CD8-positive, alpha-beta T cell (primary cell): ENCODE measurements at regions of chr19 and their contacts with region 1.

Region 1: DNA sequence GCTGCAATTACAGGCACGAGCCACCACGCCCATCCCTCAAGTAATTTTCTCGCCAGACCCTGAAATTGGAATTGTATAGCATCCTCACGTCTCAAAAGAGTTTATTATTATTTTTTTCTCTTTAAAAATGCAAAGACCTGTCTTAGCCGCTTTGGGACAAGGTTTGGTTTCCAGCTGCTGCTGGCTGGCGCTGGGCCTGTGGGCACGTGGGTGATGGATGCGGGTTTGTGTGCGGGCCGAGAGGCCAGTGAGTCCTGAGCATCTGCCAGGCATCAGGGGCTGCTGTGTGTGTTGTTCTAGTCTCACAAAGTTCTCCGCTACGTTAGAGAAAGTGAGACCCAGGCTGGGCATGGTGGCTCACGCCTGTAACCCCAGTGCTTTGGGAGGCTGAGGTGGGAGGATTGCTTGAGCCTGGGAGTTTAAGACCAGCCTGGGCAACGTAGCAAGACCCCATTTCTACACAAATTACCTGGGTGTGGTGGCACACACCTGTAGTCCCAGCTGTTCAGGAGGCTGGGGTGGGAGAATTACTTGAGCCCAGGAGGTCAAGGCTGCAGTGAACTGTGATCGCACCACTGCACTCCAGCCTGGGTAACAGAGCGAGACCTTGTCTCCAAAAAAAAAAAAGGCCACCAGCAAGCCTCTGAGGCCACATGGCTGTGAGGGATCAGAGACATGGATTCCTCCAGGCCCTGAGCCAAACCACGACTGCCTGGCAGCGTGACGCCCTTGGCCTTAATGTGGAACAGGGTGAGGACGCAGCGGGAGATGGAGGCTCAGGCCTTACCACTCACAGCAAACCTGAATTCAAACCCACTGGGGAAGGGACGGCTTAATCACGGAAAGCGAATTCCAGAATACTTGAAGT is 4.7 kb upstream of the TMPRSS9 start:
- DNase-seq: no peak
- ATAC-seq: no peak
- H3K4me3 ChIP-seq: no peak overlapping the region
- H3K4me3 Mint-ChIP-seq: no peak overlapping the region
- H3K27ac ChIP-seq: no peak overlapping the region
- H3K27ac Mint-ChIP-seq: no peak overlapping the region
- H3K4me1 ChIP-seq: no peaks in the 10 kb centered on the region
- H3K4me1 Mint-ChIP-seq: peaks cover 1% of the 10 kb centered on the region
- H3K27me3 ChIP-seq: no peaks in the 10 kb centered on the region
- H3K27me3 Mint-ChIP-seq: peaks cover 1% of the 10 kb centered on the region
- CTCF ChIP-seq: no peak

Region 2: GRCh38 chr19:2302319-2303210 is 52.8 kb before region 1 on chr19:
- CTCF ChIA-PET with region 1: no interaction called
- POLR2A ChIA-PET with region 1: no interaction called
- intact Hi-C with region 1: no loop called
- DNase-seq: peak in 2 of 9 experiments; percentile 20 to 51
- ATAC-seq: peak; percentile 58
- H3K4me3 ChIP-seq: no peak overlapping the region
- H3K4me3 Mint-ChIP-seq: peak overlapping the region; percentile 64
- H3K27ac ChIP-seq: no peak overlapping the region
- H3K27ac Mint-ChIP-seq: no peak overlapping the region
- H3K4me1 ChIP-seq: peaks cover 17% of the 10 kb centered on the region
- H3K4me1 Mint-ChIP-seq: peaks cover 5% of the 10 kb centered on the region
- H3K27me3 ChIP-seq: peaks cover 6 to 19% of the 10 kb centered on the region in 2 experiments
- H3K27me3 Mint-ChIP-seq: peaks cover 27% of the 10 kb centered on the region
- CTCF ChIP-seq: no peak

Region 3: GRCh38 chr19:2315818-2316353 is 39.5 kb before region 1 on chr19:
- CTCF ChIA-PET with region 1: no interaction called
- POLR2A ChIA-PET with region 1: no interaction called
- intact Hi-C with region 1: no loop called
- DNase-seq: peak in 4 of 9 experiments; percentile 29 to 66 (median 51)
- ATAC-seq: no peak
- H3K4me3 ChIP-seq: no peak overlapping the region
- H3K4me3 Mint-ChIP-seq: no peak overlapping the region
- H3K27ac ChIP-seq: no peak overlapping the region
- H3K27ac Mint-ChIP-seq: no peak overlapping the region
- H3K4me1 ChIP-seq: peaks cover 6% of the 10 kb centered on the region
- H3K4me1 Mint-ChIP-seq: no peaks in the 10 kb centered on the region
- H3K27me3 ChIP-seq: peaks cover 6 to 10% of the 10 kb centered on the region in 2 experiments
- H3K27me3 Mint-ChIP-seq: peaks cover 20% of the 10 kb centered on the region
- CTCF ChIP-seq: no peak

Region 4: GRCh38 chr19:2410023-2410422 is 54.6 kb after region 1 on chr19:
- CTCF ChIA-PET with region 1: no interaction called
- POLR2A ChIA-PET with region 1: no interaction called
- intact Hi-C with region 1: loop called in 1 of 2 experiments (anchors 2 kb)
- DNase-seq: no peak
- ATAC-seq: no peak
- H3K4me3 ChIP-seq: no peak overlapping the region
- H3K4me3 Mint-ChIP-seq: no peak overlapping the region
- H3K27ac ChIP-seq: no peak overlapping the region
- H3K27ac Mint-ChIP-seq: no peak overlapping the region
- H3K4me1 ChIP-seq: no peaks in the 10 kb centered on the region
- H3K4me1 Mint-ChIP-seq: no peaks in the 10 kb centered on the region
- H3K27me3 ChIP-seq: peaks cover 0 to 4% of the 10 kb centered on the region in 2 experiments
- H3K27me3 Mint-ChIP-seq: peaks cover 4% of the 10 kb centered on the region
- CTCF ChIP-seq: no peak

Region 5: DNA sequence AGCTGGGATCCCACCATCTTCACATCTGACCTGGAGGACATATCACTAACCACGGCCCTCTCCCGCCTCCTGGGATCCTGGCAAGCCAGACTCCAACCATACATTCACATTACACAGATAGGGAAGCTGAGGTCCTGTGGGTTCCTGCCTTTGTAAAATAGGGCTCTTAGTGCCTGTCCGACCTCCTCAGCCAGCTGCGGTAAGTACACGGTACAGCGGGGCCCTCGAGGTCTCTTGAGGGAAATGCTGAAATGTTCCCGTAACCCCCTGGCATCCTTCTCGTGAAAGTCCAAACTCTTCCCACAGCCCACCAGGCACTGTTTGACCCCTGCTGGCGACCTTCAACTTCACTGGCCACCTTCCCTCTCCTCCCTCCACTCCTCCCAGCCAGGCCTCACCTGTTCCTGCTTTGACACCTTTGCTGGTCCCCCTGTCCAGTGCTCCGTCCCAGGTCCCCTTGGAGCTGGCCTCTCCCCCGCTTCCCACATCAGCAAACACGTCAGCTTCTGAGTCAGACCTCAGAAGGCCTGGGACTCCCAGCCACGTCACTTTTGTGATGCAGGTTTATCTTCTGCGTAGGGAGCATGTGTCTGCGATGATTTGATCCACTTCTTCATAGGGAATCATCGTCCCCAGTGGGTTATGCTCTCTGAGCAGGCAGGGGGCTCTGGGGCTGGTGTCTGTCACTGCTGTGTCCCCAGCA is 355.9 kb after region 1 on chr19:
- CTCF ChIA-PET with region 1: no interaction called
- POLR2A ChIA-PET with region 1: no interaction called
- intact Hi-C with region 1: no loop called
- DNase-seq: no peak
- ATAC-seq: no peak
- H3K4me3 ChIP-seq: no peak overlapping the region
- H3K4me3 Mint-ChIP-seq: no peak overlapping the region
- H3K27ac ChIP-seq: no peak overlapping the region
- H3K27ac Mint-ChIP-seq: peak overlapping the region; percentile 79
- H3K4me1 ChIP-seq: peaks cover 5% of the 10 kb centered on the region
- H3K4me1 Mint-ChIP-seq: peaks cover 13% of the 10 kb centered on the region
- H3K27me3 ChIP-seq: no peaks in the 10 kb centered on the region
- H3K27me3 Mint-ChIP-seq: peaks cover 4% of the 10 kb centered on the region
- CTCF ChIP-seq: no peak